ENCODE measurements at regions of chr12 and their contacts with region 1.

Region 1: DNA sequence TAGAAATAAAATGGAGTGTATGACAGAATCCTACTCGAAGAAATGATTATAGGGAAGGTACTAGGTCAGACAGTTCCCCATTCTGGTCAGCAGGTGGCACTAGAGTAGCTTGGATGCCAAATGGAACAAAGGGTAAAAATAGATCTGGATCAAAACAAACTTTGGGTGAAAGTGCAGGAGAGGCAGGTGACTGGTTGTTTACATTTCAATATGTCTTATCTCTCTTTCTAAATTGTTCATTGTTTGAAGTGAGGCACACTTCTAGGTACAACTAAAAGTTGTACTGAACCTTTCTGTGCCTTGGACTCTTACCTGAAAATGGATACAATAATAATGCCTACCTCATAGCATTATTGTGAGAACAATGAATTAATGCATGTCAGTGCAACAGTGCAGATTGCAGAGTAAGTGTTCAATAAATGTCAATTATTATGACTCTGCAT is 62.0 kb upstream of the OSBPL8 start:
- DNase-seq: peak; percentile 73 to 80
- ATAC-seq: peak; percentile 81
- H3K4me3 ChIP-seq: no peak overlapping the region
- H3K27ac ChIP-seq: no peak overlapping the region
- H3K4me1 ChIP-seq: no peaks in the 10 kb centered on the region
- H3K27me3 ChIP-seq: no peaks in the 10 kb centered on the region

Region 2: GRCh38 chr12:76652402-76652801 is 30.8 kb after region 1 on chr12:
- intact Hi-C with region 1: no loop called
- DNase-seq: no peak
- ATAC-seq: no peak
- H3K4me3 ChIP-seq: no peak overlapping the region
- H3K27ac ChIP-seq: no peak overlapping the region
- H3K4me1 ChIP-seq: no peaks in the 10 kb centered on the region
- H3K27me3 ChIP-seq: no peaks in the 10 kb centered on the region

Region 3: DNA sequence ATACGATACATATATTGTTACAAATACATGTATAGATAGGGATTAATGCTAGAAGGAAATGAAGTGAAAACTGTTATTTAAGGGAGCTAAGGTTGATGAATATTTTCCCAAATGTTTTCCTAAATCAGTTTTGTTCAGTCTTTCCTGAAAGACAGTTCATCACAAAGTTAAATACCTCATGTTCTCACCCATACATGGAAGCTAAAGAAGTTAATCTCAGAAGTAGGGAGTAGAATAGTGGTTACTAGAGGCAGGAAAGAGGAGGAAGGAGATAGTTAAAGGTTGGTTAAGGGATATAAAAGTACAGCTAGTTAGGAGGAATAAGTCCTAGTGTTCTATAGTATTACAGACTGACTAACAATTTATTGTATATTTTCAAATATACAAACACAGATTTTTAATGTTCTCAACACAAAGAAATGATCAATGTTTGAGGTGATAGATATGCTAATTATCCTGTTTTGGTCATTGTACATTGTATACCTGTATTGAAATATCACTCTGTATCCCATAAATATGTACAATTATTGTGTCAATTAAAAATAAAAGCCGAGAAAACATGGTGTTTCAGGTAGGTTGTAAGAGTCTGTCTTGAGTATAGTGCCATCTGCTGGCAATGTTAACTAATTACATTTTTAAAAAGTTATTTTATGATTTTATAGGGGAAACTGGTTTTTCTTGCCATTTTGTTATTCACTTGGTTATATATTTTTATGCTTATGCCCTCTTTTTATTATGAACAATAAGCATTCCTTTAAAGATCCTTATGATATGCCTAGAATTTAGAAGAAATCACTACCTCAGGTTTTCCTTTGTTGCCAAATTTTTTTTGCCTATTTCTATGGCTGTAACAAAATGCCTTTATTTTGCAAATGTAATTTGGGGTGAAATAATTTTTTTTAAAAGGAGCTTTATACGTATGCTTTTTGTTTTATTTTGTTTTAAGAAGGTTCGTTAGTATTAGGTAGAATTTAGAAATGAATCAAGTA is 169.3 kb after region 1 on chr12:
- intact Hi-C with region 1: loop called (anchors 2 kb)
- DNase-seq: no peak
- ATAC-seq: peak; percentile 72
- H3K4me3 ChIP-seq: no peak overlapping the region
- H3K27ac ChIP-seq: no peak overlapping the region
- H3K4me1 ChIP-seq: peaks cover 0 to 1% of the 10 kb centered on the region in 2 donors
- H3K27me3 ChIP-seq: no peaks in the 10 kb centered on the region

Region 4: DNA sequence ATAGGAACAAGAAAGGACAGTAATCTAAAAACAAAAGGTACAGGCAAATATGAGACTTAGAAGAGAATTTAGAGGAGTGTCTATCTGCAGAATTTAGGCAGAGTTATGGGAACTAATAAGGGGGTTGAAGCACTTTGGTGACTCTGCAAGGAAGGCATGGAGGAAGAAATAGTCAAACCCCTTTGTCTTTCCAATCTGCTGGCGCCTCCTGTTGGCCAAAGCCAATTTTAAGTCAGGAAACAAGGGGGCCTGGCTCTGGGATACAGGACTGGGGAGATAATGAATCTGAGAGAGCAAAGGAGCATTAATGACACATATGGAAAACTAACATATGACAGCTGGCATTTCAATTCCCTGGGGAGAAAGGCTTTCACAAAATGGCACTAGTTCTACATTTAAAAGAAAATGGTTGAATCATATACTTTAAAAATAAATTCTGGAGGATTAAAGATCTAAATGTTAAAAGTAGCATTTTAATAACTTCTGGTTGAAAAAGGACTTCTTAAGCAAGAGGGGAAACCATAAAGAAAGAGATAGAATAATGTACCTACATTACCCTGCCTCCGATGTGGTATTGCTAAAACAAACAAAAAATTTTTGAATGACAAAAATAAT is 305.7 kb after region 1 on chr12:
- intact Hi-C with region 1: loop called in 1 of 2 experiments (anchors 5 kb)
- DNase-seq: no peak
- ATAC-seq: no peak
- H3K4me3 ChIP-seq: no peak overlapping the region
- H3K27ac ChIP-seq: no peak overlapping the region
- H3K4me1 ChIP-seq: peaks cover 2 to 3% of the 10 kb centered on the region in 2 donors
- H3K27me3 ChIP-seq: no peaks in the 10 kb centered on the region

Region 5: GRCh38 chr12:77010691-77011548 is 389.3 kb after region 1 on chr12:
- intact Hi-C with region 1: loop called (anchors 2 to 5 kb)
- DNase-seq: peak; percentile 66 to 88
- ATAC-seq: peak; percentile 87
- H3K4me3 ChIP-seq: no peak overlapping the region
- H3K27ac ChIP-seq: no peak overlapping the region
- H3K4me1 ChIP-seq: peaks cover 0 to 2% of the 10 kb centered on the region in 2 donors
- H3K27me3 ChIP-seq: no peaks in the 10 kb centered on the region